Sigmoid colon (tissue), 7 donors: ENCODE measurements at regions of chr4 and their contacts with region 1.

Region 1: GRCh38 chr4:128809477-128810330 is at the start of gene JADE1:
- DNase-seq: peak; percentile 95
- H3K4me3 ChIP-seq: peak within 1 kb of the TSS; percentile 75 to 98 (median 95)
- H3K27ac ChIP-seq: peak within 1 kb of the TSS; percentile 94 to 98 (median 96)
- H3K4me1 ChIP-seq: peaks cover 0 to 23% (median 16%) of the 10 kb centered on the region in 4 donors
- H3K27me3 ChIP-seq: no peaks in the 10 kb centered on the region
- CTCF ChIP-seq: peak; percentile 40 to 53 (median 42)
- EP300 ChIP-seq: no peak
- POLR2A ChIP-seq: no peak
- total RNA-seq, gene JADE1: 27.7 to 45.1 (median 37.9) TPM

Region 2: GRCh38 chr4:128287871-128288688 is 521.6 kb before region 1 on chr4:
- intact Hi-C with region 1: loop called (anchors 2 kb)
- DNase-seq: peak; percentile 100
- H3K4me3 ChIP-seq: peak overlapping the region; percentile 75 to 90 (median 88)
- H3K27ac ChIP-seq: peak overlapping the region; percentile 89 to 97 (median 94)
- H3K4me1 ChIP-seq: peaks cover 0 to 38% (median 25%) of the 10 kb centered on the region in 4 donors
- H3K27me3 ChIP-seq: no peaks in the 10 kb centered on the region
- CTCF ChIP-seq: peak in 3 of 4 experiments; percentile 30 to 37 (median 32)
- EP300 ChIP-seq: peak in 2 of 4 donors; percentile 61 to 63
- POLR2A ChIP-seq: peak; percentile 47 to 53

Region 3: GRCh38 chr4:128454281-128455075 is 355.2 kb before region 1 on chr4:
- intact Hi-C with region 1: loop called (anchors 1 kb)
- DNase-seq: peak; percentile 95
- H3K4me3 ChIP-seq: no peak overlapping the region
- H3K27ac ChIP-seq: peak overlapping the region in 2 of 4 donors; percentile 27 to 49
- H3K4me1 ChIP-seq: peaks cover 0 to 48% (median 30%) of the 10 kb centered on the region in 4 donors
- H3K27me3 ChIP-seq: no peaks in the 10 kb centered on the region
- CTCF ChIP-seq: peak; percentile 73 to 86 (median 76)
- EP300 ChIP-seq: no peak
- POLR2A ChIP-seq: no peak

Region 4: DNA sequence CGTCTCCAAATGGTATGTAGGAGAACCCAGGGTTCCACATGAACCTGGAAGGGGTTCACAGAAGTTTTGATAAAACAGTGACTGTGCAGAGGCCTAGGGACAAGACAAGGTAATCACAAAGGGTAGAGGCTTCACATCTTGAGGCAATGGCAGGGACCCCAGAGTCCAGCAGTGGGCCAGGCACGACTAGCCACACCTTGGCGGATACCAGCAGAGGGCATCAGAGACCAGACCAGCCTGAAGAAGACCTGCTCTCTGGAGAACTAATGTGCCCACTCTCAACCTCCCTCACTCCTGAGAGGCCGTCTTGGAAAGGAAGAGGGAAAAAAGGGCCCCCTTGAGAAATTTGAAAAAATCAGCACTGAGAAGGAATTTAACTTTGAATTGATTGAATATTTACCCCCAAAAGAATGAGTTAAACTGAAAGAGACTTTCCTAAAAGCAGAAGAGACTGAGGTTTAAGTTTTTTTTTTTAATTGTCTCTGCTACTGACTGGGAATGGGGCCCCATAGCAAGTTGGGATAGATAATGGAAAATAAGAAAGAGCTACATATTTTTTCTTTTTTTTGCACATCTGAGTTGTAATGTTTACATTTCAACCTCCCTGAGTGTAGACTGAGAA is 244.0 kb before region 1 on chr4:
- intact Hi-C with region 1: loop called (anchors 2 kb)
- DNase-seq: peak; percentile 72
- H3K4me3 ChIP-seq: no peak overlapping the region
- H3K27ac ChIP-seq: no peak overlapping the region
- H3K4me1 ChIP-seq: peaks cover 0 to 32% (median 20%) of the 10 kb centered on the region in 4 donors
- H3K27me3 ChIP-seq: no peaks in the 10 kb centered on the region
- CTCF ChIP-seq: peak; percentile 22 to 68 (median 62)
- EP300 ChIP-seq: no peak
- POLR2A ChIP-seq: no peak

Region 5: DNA sequence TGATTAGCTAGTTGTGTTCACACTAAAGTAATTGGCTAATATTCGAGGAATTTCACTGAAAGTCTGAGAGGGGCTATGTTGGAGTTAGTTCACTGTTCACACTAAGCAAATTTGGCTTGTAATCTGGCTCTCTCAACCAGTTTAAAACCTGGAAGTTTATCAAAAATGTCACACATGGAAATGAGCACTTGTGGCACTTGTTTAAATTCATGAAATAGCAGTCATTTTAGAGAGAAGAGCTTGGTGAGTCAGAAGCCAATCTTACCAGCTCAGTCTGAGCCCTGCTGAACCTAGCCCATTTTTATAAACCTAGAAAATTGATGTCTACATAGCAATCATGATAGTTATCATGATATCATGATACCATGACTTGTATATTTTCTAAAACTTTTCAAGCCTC is 90.9 kb before region 1 on chr4:
- intact Hi-C with region 1: loop called (anchors 5 kb)
- DNase-seq: no peak
- H3K4me3 ChIP-seq: no peak overlapping the region
- H3K27ac ChIP-seq: peak overlapping the region in 2 of 4 donors; percentile 12 to 39
- H3K4me1 ChIP-seq: peaks cover 0 to 39% (median 34%) of the 10 kb centered on the region in 4 donors
- H3K27me3 ChIP-seq: no peaks in the 10 kb centered on the region
- CTCF ChIP-seq: no peak
- EP300 ChIP-seq: no peak
- POLR2A ChIP-seq: no peak

Region 6: DNA sequence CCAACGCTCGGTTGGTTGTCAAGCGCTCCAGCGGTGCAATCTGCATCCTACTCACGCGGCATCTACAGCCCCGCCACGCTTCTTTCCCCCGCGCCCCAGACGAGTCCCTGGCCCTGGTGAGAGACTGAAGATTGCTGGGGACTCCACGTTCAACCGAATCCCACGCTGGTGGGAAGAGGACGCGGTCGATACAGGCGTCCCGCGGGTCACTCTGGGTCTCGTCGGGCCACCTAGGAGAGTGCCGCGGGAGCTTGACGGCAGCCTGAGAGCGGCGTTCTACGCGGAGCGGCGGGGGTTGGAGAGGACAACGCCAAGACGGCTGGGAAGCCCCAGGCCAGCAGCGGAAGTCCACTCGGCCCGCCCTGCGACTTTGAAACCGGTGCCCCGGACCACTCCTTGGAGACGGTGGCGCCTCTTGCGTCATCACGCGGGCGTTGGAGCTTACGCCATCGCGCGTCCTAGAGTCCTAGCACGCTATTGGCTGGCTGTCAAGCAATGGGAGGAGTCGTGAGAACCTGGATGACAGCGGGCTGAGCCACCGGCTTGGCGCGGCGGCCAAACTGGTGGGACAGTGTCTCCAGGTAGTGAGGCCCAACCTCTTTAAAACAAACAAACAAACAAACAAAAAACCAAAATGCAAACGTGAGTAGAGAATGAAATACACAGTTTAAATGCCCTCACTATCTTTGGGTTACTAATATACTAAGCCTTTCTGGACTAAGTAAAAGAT is 283.7 kb after region 1 on chr4 and contains the start of gene SCLT1:
- intact Hi-C with region 1: loop called (anchors 5 kb)
- DNase-seq: peak; percentile 99
- H3K4me3 ChIP-seq: peak within 1 kb of the TSS; percentile 77 to 88 (median 78)
- H3K27ac ChIP-seq: peak within 1 kb of the TSS; percentile 96 to 98 (median 96)
- H3K4me1 ChIP-seq: peaks cover 0 to 24% (median 18%) of the 10 kb centered on the region in 4 donors
- H3K27me3 ChIP-seq: no peaks in the 10 kb centered on the region
- CTCF ChIP-seq: no peak
- EP300 ChIP-seq: peak in 1 of 4 donors; percentile 12
- POLR2A ChIP-seq: peak; percentile 61 to 84
- total RNA-seq, gene SCLT1: 9.9 to 18.8 (median 14.0) TPM